ENCODE measurements at regions of chr3 and their contacts with region 1.

Region 1: GRCh38 chr3:136042608-136043221 is 77.2 kb downstream of the PPP2R3A start:
- DNase-seq: no peak
- ATAC-seq: peak; percentile 46; the same call in 1 of the 2 replicates
- H3K4me3 Mint-ChIP-seq: no peak overlapping the region
- H3K27ac Mint-ChIP-seq: no peak overlapping the region
- H3K4me1 Mint-ChIP-seq: peaks cover 8% of the 10 kb centered on the region
- H3K27me3 Mint-ChIP-seq: no peaks in the 10 kb centered on the region
- CTCF ChIP-seq: no peak

Region 2: DNA sequence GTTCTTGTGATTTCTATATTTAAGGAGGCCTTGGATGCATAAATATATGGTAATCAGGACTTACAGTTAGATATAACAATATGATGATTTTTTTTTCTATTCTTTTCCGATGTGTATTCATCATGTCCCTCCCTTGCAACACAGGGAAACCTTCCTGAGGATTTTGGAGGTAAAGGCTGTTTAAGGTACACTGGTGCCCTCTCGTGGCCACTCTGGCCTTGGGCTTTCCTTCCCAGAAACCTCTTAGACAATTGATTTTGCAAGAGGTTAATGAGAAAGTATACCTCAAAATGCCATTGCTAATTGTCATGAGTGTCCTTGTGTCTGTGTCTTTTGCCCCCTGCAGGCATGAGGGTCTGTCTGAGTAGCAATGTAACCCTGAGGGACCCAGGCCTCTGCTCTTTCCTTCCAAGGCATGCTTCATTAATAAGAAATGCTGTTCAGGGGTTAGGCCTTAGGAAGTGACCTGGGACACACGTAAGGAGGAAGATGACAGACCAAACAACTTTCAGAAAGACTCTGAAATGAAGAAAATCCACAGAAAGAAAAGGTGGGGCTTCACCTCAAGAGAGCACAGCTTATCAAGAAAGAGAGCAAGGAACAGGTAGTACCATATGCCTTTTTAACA is 147.5 kb before region 1 on chr3:
- CTCF ChIA-PET with region 1: interaction called, 24 read pairs
- POLR2A ChIA-PET with region 1: no interaction called
- DNase-seq: peak; percentile 84
- ATAC-seq: peak; percentile 73
- H3K4me3 Mint-ChIP-seq: no peak overlapping the region
- H3K27ac Mint-ChIP-seq: no peak overlapping the region
- H3K4me1 Mint-ChIP-seq: peaks cover 13% of the 10 kb centered on the region
- H3K27me3 Mint-ChIP-seq: no peaks in the 10 kb centered on the region
- CTCF ChIP-seq: peak; percentile 68

Region 3: GRCh38 chr3:135905058-135905724 is 137.5 kb before region 1 on chr3:
- CTCF ChIA-PET with region 1: interaction called, 95 read pairs
- POLR2A ChIA-PET with region 1: no interaction called
- DNase-seq: no peak
- ATAC-seq: peak; percentile 82
- H3K4me3 Mint-ChIP-seq: no peak overlapping the region
- H3K27ac Mint-ChIP-seq: peak overlapping the region; percentile 29; the same call in 1 of the 2 replicates
- H3K4me1 Mint-ChIP-seq: peaks cover 17% of the 10 kb centered on the region
- H3K27me3 Mint-ChIP-seq: no peaks in the 10 kb centered on the region; the same call in 1 of the 2 replicates
- CTCF ChIP-seq: no peak

Region 4: DNA sequence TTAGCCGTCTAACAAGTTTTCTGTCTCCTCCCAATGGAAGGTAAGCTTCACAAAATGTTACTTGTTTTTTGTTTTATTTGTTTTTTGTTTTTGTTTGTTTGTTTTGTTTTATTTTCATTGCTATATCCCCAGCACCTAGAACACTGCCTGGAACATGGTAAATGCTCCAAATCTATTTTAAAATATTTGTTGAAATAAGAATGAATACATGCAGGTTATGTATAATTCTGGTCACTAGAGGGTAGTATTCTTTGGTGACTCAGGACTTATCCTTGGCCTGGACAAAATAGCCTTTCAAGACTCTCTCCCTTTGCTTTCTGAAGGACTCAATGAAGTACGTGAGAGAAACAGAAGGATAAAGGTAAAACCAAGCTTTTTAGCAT is 124.1 kb before region 1 on chr3:
- CTCF ChIA-PET with region 1: interaction called, 52 read pairs
- POLR2A ChIA-PET with region 1: no interaction called
- DNase-seq: no peak
- ATAC-seq: peak; percentile 61
- H3K4me3 Mint-ChIP-seq: no peak overlapping the region
- H3K27ac Mint-ChIP-seq: no peak overlapping the region
- H3K4me1 Mint-ChIP-seq: peaks cover 30% of the 10 kb centered on the region
- H3K27me3 Mint-ChIP-seq: no peaks in the 10 kb centered on the region
- CTCF ChIP-seq: no peak

Region 5: DNA sequence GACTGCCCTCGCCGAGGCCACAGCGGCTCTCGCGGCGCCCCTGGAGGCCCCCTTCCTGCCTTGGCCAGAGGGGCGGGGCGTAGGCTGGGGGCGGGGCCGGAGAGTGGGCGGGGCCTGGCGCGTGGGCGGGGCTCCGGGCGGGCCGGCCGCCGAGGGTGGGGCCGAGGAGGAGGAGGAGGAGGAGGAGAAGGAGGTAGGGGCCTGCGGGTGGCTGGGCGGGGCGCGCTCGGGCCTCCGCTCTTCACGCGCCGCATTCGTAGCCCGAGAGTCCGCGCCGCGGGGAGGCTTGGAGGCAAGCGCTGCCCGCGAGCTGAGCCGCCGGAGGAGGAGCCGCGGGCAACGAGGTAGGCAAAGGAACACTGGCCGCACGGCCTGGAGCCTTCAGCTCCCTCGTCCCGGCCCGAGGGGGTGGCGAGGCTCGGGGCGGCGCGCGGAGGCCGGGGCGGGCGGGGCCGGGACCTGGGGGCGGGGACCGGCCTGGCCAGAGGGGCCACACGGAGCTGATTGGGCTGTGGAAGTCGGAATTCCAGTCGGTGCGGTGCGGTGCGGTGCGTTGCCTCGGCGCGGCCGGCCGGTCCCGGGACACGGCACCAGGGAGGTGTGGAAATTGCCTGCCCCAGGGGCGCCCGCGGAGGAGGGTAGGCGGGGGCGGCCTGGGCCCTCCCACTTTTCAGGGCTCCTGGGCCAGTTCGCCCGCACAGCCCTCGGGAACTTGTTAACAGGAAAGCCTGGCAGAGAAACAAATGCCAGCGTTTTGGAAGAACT is 77.0 kb before region 1 on chr3 and contains the start of gene PPP2R3A:
- CTCF ChIA-PET with region 1: interaction called, 27 read pairs
- POLR2A ChIA-PET with region 1: no interaction called
- DNase-seq: peak; percentile 93
- ATAC-seq: peak; percentile 83
- H3K4me3 Mint-ChIP-seq: peak within 1 kb of the TSS; percentile 84
- H3K27ac Mint-ChIP-seq: peak within 1 kb of the TSS; percentile 89
- H3K4me1 Mint-ChIP-seq: peaks cover 50% of the 10 kb centered on the region
- H3K27me3 Mint-ChIP-seq: no peaks in the 10 kb centered on the region
- CTCF ChIP-seq: no peak
- total RNA-seq, gene PPP2R3A: 12.1 to 13.1 TPM (median 12.9 TPM) in 3 replicates

Region 6: DNA sequence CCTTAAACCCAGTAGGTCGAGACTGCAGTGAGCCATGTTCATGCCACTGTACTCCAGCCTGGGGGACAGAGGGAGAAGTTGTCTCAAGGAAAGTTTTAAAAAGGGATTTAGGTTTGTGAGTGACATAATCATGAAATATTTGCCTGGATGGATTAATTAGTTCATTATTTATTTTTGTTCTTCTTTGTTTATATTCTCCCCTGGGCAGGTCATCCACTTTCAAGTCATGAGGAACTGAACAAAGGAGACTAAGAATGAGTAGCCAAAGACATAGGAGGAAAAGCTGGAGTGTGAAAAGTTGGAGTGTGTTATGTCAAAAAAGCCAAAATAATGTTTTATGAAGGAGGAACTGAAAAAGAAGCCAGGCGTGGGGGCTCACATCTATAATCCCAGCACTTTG is 189.7 kb after region 1 on chr3:
- CTCF ChIA-PET with region 1: no interaction called
- POLR2A ChIA-PET with region 1: no interaction called
- DNase-seq: no peak
- ATAC-seq: no peak
- H3K4me3 Mint-ChIP-seq: no peak overlapping the region
- H3K27ac Mint-ChIP-seq: no peak overlapping the region
- H3K4me1 Mint-ChIP-seq: peaks cover 14% of the 10 kb centered on the region
- H3K27me3 Mint-ChIP-seq: peaks cover 19% of the 10 kb centered on the region
- CTCF ChIP-seq: no peak

Region 7: DNA sequence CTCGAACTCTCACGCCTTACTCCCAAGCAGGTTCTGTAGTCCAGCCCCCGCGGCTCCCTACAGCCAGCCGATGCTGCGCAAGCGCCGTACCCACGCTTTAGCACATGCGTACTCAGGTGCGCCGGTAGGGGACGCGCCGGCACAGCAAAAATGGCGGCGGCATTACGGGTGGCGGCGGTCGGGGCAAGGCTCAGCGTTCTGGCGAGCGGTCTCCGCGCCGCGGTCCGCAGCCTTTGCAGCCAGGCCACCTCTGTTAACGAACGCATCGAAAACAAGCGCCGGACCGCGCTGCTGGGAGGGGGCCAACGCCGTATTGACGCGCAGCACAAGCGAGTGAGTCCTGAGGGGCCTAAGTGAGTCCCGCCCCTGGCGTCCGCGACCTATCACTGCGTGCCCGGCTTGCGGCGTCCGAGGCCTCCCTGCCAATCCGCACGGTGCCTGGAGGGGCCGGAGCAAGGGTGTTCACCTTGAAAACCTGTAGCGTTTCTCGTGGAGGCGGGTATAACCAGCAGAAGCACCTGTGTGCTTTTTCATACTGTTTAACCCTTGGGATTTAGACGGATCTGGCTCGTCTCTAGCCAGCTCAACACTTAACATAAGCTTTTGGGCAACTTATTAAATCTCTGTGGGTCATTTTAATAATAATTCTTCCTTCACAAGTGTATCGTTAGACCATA is 207.6 kb after region 1 on chr3 and contains the start of gene PCCB:
- CTCF ChIA-PET with region 1: no interaction called
- POLR2A ChIA-PET with region 1: no interaction called
- DNase-seq: peak; percentile 95
- ATAC-seq: peak; percentile 98
- H3K4me3 Mint-ChIP-seq: peak within 1 kb of the TSS; percentile 81
- H3K27ac Mint-ChIP-seq: peak within 1 kb of the TSS; percentile 99
- H3K4me1 Mint-ChIP-seq: peaks cover 41% of the 10 kb centered on the region
- H3K27me3 Mint-ChIP-seq: no peaks in the 10 kb centered on the region
- CTCF ChIP-seq: peak; percentile 69
- total RNA-seq, gene PCCB: 69.0 to 77.2 TPM (median 72.1 TPM) in 3 replicates

Measured in WTC11 (cell line).